GM12878 (cell line): ENCODE measurements at regions of chr3 and their contacts with region 1.

Region 1: GRCh38 chr3:111911446-111911845 is 52.4 kb downstream of the PHLDB2 start:
- DNase-seq: no peak
- ATAC-seq: no peak
- H3K4me3 ChIP-seq: no peak overlapping the region
- H3K27ac ChIP-seq: no peak overlapping the region
- H3K4me1 ChIP-seq: no peaks in the 10 kb centered on the region
- H3K27me3 ChIP-seq: no peaks in the 10 kb centered on the region
- CTCF ChIP-seq: no peak
- EP300 ChIP-seq: no peak
- POLR2A ChIP-seq: no peak
- RAD21 ChIP-seq: no peak

Region 2: GRCh38 chr3:111956995-111957734 is 45.7 kb after region 1 on chr3:
- CTCF ChIA-PET with region 1: no interaction called
- POLR2A ChIA-PET with region 1: no interaction called
- RAD21 ChIA-PET with region 1: no interaction called
- SMC1A ChIA-PET with region 1: interaction called, 10 read pairs
- in situ Hi-C with region 1: no loop called
- intact Hi-C with region 1: no loop called
- DNase-seq: no peak
- ATAC-seq: no peak
- H3K4me3 ChIP-seq: no peak overlapping the region
- H3K27ac ChIP-seq: no peak overlapping the region
- H3K4me1 ChIP-seq: no peaks in the 10 kb centered on the region
- H3K27me3 ChIP-seq: peaks cover 0 to 4% of the 10 kb centered on the region in 2 experiments; a peak in 1 of 4 replicates
- CTCF ChIP-seq: no peak
- EP300 ChIP-seq: no peak
- POLR2A ChIP-seq: no peak
- RAD21 ChIP-seq: no peak